ENCODE measurements at regions of chr2 and their contacts with region 1.

Region 1: GRCh38 chr2:110211938-110212858 is at the start of gene MTLN:
- DNase-seq: peak; percentile 83
- H3K4me3 ChIP-seq: peak within 1 kb of the TSS; percentile 55 to 85 (median 73)
- H3K27ac ChIP-seq: peak within 1 kb of the TSS; percentile 68
- H3K4me1 ChIP-seq: no peaks in the 10 kb centered on the region
- H3K27me3 ChIP-seq: no peaks in the 10 kb centered on the region
- CTCF ChIP-seq: no peak
- total RNA-seq, gene MTLN: 27.5 to 69.5 TPM

Region 2: DNA sequence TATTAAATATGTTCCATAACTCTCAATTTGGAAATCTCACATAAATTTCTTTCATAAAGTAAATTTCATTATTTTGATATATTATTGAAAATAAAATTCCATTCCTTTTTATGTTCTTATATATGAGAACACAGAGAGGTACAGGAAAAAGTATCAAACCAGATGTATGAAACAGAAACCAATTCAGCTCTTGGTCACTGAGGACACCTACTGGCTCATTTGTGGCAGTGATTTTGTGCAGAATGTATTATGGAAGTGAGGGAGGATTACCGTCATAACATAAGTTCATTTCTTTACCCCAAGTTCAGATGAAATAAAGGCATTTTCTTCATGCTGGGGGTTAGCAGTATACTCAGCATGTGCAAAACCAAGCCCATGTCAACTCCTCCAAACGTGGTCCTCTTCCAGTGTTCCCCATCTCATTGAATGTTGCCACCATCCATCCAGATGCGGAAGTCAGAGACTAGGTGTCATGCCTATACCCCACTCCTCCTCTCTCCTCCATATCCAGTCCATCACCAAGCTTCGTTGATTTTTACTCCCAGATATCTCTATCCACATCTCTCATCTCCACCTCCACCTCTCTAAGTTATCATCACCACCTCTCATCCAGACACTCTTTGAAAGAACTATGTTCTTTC is 54.9 kb before region 1 on chr2:
- CTCF ChIA-PET with region 1: no interaction called
- dilution Hi-C with region 1: no loop called
- in situ Hi-C with region 1: no loop called
- intact Hi-C with region 1: loop called (anchors 10 kb)
- DNase-seq: peak; percentile 69
- H3K4me3 ChIP-seq: no peak overlapping the region
- H3K27ac ChIP-seq: peak overlapping the region; percentile 67
- H3K4me1 ChIP-seq: peaks cover 6% of the 10 kb centered on the region
- H3K27me3 ChIP-seq: no peaks in the 10 kb centered on the region
- CTCF ChIP-seq: peak; percentile 84 to 96

Region 3: DNA sequence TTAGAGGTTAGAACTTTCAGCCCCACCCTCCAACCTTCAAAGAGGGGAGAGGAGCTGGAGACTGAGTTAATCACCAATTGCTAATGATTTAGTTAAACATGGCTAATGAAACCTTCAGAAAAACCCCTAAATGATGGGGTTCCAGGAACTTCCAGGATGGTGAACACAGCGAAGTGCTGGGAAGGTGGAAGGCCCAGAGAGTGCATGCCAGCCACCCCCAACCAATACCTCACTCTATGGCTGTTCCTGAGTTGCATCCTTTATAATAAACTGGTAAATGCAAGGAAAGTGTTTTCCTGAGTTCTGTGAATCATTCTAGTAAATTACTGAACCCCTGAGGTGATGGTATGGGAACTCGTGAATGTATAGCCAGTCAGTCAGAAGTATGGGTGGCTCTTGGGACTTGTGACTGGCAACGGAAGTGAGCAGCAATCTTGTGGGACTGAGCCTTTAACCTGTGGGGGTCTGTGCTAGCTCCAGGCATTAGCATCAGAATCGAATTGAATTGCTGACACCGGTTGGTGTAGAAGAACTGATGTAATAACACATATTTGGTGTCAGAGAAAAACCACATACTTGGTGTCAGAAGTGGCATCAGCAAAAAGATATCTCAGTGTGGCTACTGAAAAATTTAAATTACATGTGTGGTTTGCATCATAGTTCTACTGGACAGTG is 44.7 kb before region 1 on chr2:
- CTCF ChIA-PET with region 1: no interaction called
- dilution Hi-C with region 1: no loop called
- in situ Hi-C with region 1: no loop called
- intact Hi-C with region 1: no loop called
- DNase-seq: no peak
- H3K4me3 ChIP-seq: no peak overlapping the region
- H3K27ac ChIP-seq: no peak overlapping the region
- H3K4me1 ChIP-seq: no peaks in the 10 kb centered on the region
- H3K27me3 ChIP-seq: no peaks in the 10 kb centered on the region
- CTCF ChIP-seq: no peak

Measured in mammary epithelial cell (primary cell).